Sigmoid colon (tissue), 7 donors: ENCODE measurements at regions of chr11 and their contacts with region 1.

Region 1: GRCh38 chr11:66835768-66836405 is 7.4 kb upstream of the RCE1 start:
- DNase-seq: no peak
- H3K4me3 ChIP-seq: no peak overlapping the region
- H3K27ac ChIP-seq: no peak overlapping the region
- H3K4me1 ChIP-seq: peaks cover 0 to 2% (median 0%) of the 10 kb centered on the region in 4 donors
- H3K27me3 ChIP-seq: no peaks in the 10 kb centered on the region
- CTCF ChIP-seq: no peak
- EP300 ChIP-seq: no peak
- POLR2A ChIP-seq: no peak

Region 2: DNA sequence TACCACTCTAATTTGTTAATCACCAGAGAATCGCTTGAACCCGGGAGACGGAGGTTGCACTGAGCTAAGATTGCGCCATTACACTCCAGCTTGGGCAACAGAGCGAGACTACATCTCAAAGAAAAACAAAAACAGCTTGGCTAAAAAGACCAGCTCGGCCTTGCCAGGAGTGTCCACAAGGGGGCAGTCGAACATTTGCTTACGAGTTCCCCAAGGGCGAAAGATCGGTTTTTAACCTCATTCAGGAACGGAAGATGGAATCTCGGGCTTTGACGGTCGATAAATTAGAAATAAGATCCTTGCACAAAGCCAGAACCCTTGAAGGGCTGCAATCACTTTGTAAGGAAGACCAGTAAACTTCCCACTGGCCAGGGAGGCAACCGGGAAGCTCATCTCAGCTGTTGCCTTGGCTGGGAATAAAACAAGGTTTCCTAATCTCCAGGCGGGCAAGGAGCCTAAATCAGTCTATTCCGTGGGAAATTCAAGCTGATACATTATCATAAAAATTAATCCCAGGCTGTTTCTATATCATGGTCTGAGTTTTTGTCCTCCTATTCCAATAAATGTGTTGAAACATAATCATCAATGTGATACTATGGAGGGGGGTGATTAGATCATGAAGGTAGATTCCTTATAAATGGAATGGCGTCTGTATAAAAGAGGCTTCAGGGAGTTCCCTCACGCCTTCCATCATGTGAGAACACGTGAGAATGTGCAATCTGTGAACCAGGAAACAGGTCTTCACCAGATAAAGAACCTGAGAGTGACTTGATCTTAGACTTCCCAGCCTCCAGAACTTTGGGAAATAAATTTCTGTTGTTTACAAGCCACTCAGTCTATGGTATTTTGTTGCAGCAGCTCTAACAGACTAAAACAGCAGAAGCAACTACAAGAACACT is 449.5 kb before region 1 on chr11:
- intact Hi-C with region 1: no loop called
- DNase-seq: peak; percentile 92
- H3K4me3 ChIP-seq: peak overlapping the region in 3 of 4 donors; percentile 8 to 30 (median 24)
- H3K27ac ChIP-seq: peak overlapping the region in 1 of 4 donors; percentile 23
- H3K4me1 ChIP-seq: peaks cover 0 to 6% (median 4%) of the 10 kb centered on the region in 4 donors
- H3K27me3 ChIP-seq: peaks cover 0 to 5% (median 0%) of the 10 kb centered on the region in 3 donors
- CTCF ChIP-seq: peak; percentile 68 to 93 (median 76)
- EP300 ChIP-seq: no peak
- POLR2A ChIP-seq: no peak

Region 3: DNA sequence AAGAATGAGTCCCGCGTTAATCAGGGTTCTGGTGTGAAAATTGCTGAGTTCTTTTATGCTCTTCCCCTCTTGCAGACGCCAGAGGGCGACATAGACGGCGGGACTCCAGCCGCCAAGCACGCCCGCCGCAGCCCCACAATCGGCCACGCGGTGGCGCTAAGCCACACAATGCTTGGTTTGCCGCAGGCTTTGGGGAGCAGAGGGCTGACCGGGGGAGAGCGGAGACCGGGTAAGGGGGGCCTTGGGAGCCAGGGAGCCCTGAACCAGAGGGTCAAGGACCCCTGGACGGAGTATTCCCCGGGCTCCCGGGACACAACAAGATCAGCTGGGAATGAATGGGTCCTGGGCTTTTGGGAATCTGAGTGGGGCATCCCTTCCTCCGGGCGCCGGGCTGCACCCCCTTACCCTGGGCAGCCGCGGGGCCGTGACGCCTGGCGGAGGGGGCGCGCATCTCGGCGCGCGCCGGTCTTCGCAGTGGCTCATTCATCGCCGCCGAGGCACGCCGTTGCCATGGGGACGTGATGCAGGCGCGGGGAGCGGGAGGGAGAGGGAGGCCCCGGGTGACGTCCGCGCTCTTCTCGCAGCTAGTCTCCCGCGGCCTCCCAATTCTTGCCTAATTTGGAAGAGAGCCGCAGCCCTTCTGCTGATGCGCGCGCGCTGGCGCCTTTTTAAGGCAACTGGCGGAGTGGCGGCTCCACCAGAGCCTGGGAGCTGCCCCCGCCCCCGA is 427.2 kb before region 1 on chr11:
- intact Hi-C with region 1: loop called (anchors 5 kb)
- DNase-seq: peak; percentile 98
- H3K4me3 ChIP-seq: peak overlapping the region; percentile 29 to 52 (median 46)
- H3K27ac ChIP-seq: peak overlapping the region; percentile 82 to 96 (median 85)
- H3K4me1 ChIP-seq: peaks cover 0 to 52% (median 47%) of the 10 kb centered on the region in 4 donors
- H3K27me3 ChIP-seq: no peaks in the 10 kb centered on the region
- CTCF ChIP-seq: peak; percentile 99 to 100 (median 100)
- EP300 ChIP-seq: peak; percentile 45 to 89 (median 79)
- POLR2A ChIP-seq: peak in 1 of 2 donors; percentile 37

Region 4: DNA sequence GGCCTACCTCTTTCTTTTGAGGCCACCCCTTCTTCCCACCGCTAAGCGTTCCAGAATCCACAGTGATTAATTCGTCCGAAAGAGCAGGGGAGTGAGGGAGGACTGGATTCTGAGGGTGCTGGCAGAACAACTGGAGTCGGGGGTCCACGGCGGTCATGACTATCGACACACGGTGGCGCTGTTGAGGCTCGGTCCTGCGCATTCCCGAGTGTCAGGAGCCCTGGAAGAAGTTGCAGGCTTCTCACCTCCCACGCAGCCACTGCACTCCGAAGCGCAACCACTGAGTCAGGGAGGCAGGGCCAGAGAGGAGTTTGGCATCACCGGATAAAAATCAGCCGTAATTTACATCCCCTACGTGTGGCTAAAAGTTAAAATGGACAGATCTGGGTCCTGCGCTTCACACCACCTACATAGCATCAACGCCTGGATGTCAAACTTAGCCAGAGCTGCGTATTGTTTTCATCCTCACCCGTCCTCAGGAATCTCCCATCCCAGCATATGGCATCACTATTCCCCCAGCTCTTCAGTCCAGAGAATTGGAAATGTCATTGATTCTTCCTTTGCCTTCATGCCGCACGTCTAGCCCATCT is 256.8 kb before region 1 on chr11:
- intact Hi-C with region 1: loop called (anchors 2 kb)
- DNase-seq: peak; percentile 89
- H3K4me3 ChIP-seq: no peak overlapping the region
- H3K27ac ChIP-seq: no peak overlapping the region
- H3K4me1 ChIP-seq: peaks cover 0 to 7% (median 2%) of the 10 kb centered on the region in 4 donors
- H3K27me3 ChIP-seq: no peaks in the 10 kb centered on the region
- CTCF ChIP-seq: peak; percentile 81 to 92 (median 90)
- EP300 ChIP-seq: no peak
- POLR2A ChIP-seq: no peak

Region 5: GRCh38 chr11:66694732-66695207 is 141.1 kb before region 1 on chr11:
- intact Hi-C with region 1: loop called (anchors 1 kb)
- DNase-seq: peak; percentile 93
- H3K4me3 ChIP-seq: no peak overlapping the region
- H3K27ac ChIP-seq: no peak overlapping the region
- H3K4me1 ChIP-seq: no peaks in the 10 kb centered on the region
- H3K27me3 ChIP-seq: no peaks in the 10 kb centered on the region
- CTCF ChIP-seq: peak; percentile 86 to 96 (median 93)
- EP300 ChIP-seq: no peak
- POLR2A ChIP-seq: no peak